ENCODE measurements at regions of chr6 and their contacts with region 1.

Region 1: DNA sequence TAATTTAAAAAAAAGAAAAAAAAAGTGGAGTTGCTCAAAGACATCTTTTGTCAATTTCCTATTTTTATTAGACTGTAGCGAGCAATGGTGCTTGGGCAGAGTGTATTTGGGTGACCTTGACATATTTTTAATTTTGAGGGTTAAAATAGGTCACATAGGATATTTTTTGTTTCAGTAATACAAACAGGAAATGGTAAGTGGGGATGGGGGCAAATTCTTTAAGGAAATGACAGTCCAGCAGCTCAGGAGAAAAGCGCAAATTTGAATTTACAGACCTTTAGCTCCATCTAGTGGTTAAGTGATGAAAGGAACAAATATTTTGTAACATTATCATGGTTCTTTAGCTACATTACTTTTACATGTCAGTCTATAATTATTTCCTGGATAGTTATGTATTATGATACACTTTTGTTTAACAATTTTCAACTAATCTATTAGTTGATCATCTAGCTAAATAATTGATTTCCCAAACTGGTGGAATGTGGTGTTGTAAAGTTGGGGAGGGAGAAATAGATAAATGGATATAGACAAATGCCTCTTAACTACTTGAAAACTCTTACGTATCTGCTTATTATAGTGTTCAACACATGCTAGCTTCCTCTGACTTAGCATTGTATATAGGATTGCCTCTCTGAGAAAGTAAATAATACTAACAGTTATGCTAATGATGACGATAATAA is 10.0 kb downstream of the CITED2 start:
- DNase-seq: peak; percentile 54
- CTCF ChIP-seq: peak; percentile 53

Region 2: DNA sequence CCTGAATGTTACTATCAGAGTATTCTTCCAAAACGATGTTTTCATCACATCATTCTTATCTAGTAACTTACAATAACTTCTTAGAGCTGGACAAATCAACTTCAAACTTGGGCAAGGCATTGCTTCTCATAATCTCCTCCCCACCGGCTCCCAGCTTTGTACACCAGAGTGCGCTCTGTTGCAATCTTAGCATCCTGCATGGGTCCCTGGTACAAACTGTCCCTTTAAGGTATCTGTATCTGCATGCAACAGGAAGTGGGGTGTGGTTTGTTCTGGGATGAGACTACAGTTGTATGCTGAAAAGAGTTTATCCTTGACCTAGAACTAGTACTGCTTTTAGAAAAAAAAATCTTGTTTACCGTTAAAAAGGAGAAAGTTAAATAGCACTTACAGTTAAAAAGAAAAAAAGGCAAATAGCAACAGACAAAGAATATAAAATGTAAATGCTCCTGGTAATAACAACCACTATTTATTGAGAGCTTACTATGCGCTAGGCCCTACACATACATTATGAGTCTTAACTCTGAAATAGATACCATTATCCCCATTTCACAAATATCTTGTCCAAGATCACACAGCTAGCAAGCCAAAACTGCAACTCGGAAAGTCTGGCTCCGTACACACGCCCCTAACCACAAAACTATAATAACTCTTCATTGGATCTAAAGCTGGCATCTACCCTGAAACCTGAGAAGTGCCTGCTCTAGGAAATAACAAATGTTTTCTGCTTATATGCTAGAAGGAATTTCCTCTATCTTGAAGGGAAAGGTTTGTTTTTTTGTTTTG is 239.4 kb before region 1 on chr6:
- in situ Hi-C with region 1: loop called (anchors 10 kb)
- DNase-seq: peak; percentile 43
- CTCF ChIP-seq: peak; percentile 64

Region 3: GRCh38 chr6:139219746-139220145 is 144.7 kb before region 1 on chr6:
- in situ Hi-C with region 1: loop called (anchors 10 kb)
- DNase-seq: no peak
- CTCF ChIP-seq: no peak

Measured in GM13977 (cell line).